Activated CD8-positive, alpha-beta T cell treated with anti-CD3 and anti-CD28 coated beads for 36 hours (primary cell): ENCODE measurements at regions of chr12 and their contacts with region 1.

Region 1: DNA sequence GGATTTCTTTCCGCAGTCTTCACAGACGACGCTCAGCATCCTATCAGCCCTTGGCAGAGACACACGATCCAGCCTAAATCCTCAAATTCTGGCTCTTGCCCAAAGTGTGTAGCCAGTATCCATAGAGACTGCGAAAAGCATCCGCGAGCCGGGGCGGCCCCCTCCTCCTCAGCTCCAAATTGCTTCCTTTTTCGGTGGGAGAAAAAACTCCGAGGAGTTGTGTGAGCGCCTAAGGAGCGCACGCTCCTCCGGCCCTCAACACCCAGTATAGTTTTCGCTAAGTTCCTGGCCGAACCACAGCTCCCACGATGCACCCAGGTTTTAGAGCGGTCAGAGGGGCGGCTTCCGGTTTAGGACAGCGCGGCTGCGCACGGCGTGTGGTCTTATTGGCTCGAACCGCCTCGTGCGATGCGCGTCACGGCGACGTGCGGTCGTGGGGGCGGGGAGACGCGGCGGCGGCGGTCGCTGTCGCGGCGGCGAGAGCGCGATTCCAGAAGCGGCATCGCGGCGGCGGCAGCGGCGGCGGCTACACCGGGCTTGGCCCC is at the start of gene ADIPOR2:
- DNase-seq: peak; percentile 95
- ATAC-seq: peak; percentile 98
- H3K4me3 Mint-ChIP-seq: peak within 1 kb of the TSS; percentile 98
- H3K27ac Mint-ChIP-seq: peak within 1 kb of the TSS; percentile 99
- H3K4me1 Mint-ChIP-seq: peaks cover 36% of the 10 kb centered on the region
- H3K27me3 Mint-ChIP-seq: no peaks in the 10 kb centered on the region
- CTCF ChIP-seq: no peak
- total RNA-seq, gene ADIPOR2: 48.3 to 49.9 TPM

Region 2: DNA sequence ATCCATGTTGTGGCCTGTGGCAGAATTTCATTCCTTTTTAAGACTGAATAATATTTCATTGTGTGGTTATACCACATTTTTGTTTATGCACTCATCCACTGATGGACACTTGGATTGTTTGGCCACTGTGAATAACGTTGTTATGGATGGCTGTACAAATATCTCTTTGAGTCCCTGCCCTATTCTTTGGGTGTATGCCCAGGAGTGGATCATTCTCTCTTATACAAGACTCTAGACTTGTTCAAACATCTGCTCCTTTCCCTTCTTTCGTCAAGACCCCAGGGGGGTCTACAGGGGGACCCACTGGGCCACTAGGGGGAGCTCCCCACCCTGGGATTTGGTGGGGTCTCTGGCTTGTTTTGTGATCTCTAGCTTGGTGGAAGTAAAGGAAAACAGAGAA is 173.6 kb before region 1 on chr12:
- CTCF ChIA-PET with region 1: no interaction called
- POLR2A ChIA-PET with region 1: no interaction called
- intact Hi-C with region 1: no loop called
- DNase-seq: peak; percentile 33
- ATAC-seq: no peak
- H3K4me3 Mint-ChIP-seq: no peak overlapping the region
- H3K27ac Mint-ChIP-seq: no peak overlapping the region
- H3K4me1 Mint-ChIP-seq: peaks cover 2% of the 10 kb centered on the region
- H3K27me3 Mint-ChIP-seq: peaks cover 20% of the 10 kb centered on the region
- CTCF ChIP-seq: peak; percentile 67

Region 3: GRCh38 chr12:1650260-1650977 is 40.2 kb before region 1 on chr12:
- CTCF ChIA-PET with region 1: interaction called, 14 read pairs
- POLR2A ChIA-PET with region 1: interaction called, 3 read pairs
- intact Hi-C with region 1: no loop called
- DNase-seq: no peak
- ATAC-seq: no peak
- H3K4me3 Mint-ChIP-seq: no peak overlapping the region
- H3K27ac Mint-ChIP-seq: no peak overlapping the region
- H3K4me1 Mint-ChIP-seq: no peaks in the 10 kb centered on the region
- H3K27me3 Mint-ChIP-seq: peaks cover 8% of the 10 kb centered on the region
- CTCF ChIP-seq: no peak

Region 4: DNA sequence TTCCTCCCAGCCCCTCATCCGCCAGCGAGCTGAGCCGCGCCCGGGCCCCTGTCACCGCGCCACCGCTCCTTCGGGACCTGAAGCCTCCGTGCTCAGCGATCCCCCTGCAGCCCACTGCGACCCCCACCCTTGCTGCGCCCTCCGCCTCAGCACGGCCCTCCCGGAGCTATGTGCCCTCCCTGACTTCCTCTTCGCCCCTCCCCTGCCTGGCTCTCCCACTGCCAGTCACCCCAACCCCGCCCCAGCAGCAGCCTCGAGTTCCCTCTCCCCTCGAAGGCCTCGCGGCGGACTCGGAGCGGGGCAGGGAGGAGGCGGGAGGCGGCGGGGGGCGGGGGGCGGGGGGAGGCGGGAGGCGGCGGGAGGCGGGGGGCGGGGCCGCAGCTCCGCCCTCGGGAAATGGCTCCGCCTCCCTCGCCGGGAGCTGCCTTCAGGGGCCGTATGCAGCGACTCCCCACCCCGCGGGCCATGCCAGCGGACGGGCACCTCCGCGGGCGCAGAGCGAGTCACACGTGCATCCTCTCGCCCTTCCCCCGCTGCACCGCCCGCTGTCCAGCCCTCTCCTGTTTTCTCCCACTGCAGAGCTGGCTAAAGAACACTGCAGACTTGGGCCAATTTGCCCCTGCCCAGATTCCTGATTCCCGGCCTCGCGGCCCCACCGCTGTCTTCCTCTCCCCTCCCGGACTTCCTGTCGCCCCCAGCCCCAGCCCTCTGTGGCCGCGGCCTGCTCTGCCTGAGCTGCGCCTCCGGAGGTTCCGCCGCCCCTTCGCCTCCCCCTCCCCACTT is 28.9 kb before region 1 on chr12:
- CTCF ChIA-PET with region 1: interaction called, 4 read pairs
- POLR2A ChIA-PET with region 1: interaction called, 10 read pairs
- intact Hi-C with region 1: no loop called
- DNase-seq: peak; percentile 91
- ATAC-seq: peak; percentile 93
- H3K4me3 Mint-ChIP-seq: peak overlapping the region; percentile 73
- H3K27ac Mint-ChIP-seq: peak overlapping the region; percentile 83
- H3K4me1 Mint-ChIP-seq: peaks cover 36% of the 10 kb centered on the region
- H3K27me3 Mint-ChIP-seq: no peaks in the 10 kb centered on the region
- CTCF ChIP-seq: no peak

Region 5: GRCh38 chr12:1740161-1740948 is 49.7 kb after region 1 on chr12:
- CTCF ChIA-PET with region 1: no interaction called
- POLR2A ChIA-PET with region 1: no interaction called
- intact Hi-C with region 1: loop called (anchors 10 kb)
- DNase-seq: no peak
- ATAC-seq: no peak
- H3K4me3 Mint-ChIP-seq: no peak overlapping the region
- H3K27ac Mint-ChIP-seq: no peak overlapping the region
- H3K4me1 Mint-ChIP-seq: peaks cover 49% of the 10 kb centered on the region
- H3K27me3 Mint-ChIP-seq: no peaks in the 10 kb centered on the region
- CTCF ChIP-seq: no peak